Mammary epithelial cell (primary cell): ENCODE measurements at regions of chr3 and their contacts with region 1.

Region 1: GRCh38 chr3:124688581-124689454 is 41.4 kb upstream of the UMPS start:
- DNase-seq: peak; percentile 62
- H3K4me3 ChIP-seq: no peak overlapping the region
- H3K27ac ChIP-seq: no peak overlapping the region
- H3K4me1 ChIP-seq: peaks cover 17% of the 10 kb centered on the region
- H3K27me3 ChIP-seq: no peaks in the 10 kb centered on the region
- CTCF ChIP-seq: peak; percentile 82 to 85

Region 2: DNA sequence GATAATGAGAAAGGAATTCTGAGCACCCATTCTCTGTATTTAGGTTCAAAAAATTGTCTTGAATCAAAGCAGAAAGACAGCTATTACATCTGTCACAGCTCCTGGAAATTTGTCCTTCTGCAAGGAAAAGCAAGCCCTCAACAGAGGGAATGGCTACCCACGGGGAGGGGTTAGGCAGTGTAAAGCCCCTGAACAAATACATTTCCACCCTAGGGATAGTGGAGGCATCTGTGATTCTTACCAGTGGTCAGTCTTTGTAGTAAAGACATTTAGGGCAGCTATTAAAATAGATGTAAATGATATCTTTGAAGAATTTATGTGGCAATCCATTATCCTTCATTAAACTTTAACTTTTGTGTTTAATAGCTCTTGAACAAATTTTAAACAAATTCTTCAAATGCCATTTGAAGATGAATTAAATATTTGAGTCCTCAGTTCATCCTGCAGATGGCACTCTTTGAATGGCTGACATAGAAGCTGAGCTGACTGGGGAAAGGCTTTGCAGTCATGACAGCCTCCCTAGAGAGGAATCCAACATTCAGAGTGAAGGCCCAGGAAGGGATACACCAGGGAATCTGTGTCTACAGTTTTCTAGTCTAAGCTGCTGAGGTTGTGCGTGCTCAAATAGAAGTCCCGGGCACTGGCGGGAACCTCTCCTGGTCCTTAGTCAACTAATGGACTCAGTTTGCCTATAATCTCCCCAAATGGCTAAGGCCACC is 337.2 kb before region 1 on chr3:
- CTCF ChIA-PET with region 1: no interaction called
- dilution Hi-C with region 1: no loop called
- in situ Hi-C with region 1: loop called in 1 of 2 experiments (anchors 25 kb)
- intact Hi-C with region 1: loop called (anchors 5 kb)
- DNase-seq: peak; percentile 28
- H3K4me3 ChIP-seq: no peak overlapping the region
- H3K27ac ChIP-seq: no peak overlapping the region
- H3K4me1 ChIP-seq: no peaks in the 10 kb centered on the region
- H3K27me3 ChIP-seq: peaks cover 2% of the 10 kb centered on the region
- CTCF ChIP-seq: peak; percentile 37 to 70

Region 3: GRCh38 chr3:124492811-124493210 is 196.0 kb before region 1 on chr3:
- CTCF ChIA-PET with region 1: no interaction called
- dilution Hi-C with region 1: no loop called
- in situ Hi-C with region 1: loop called in 1 of 2 experiments (anchors 10 kb)
- intact Hi-C with region 1: loop called (anchors 5 kb)
- DNase-seq: peak; percentile 68
- H3K4me3 ChIP-seq: no peak overlapping the region
- H3K27ac ChIP-seq: no peak overlapping the region
- H3K4me1 ChIP-seq: peaks cover 10% of the 10 kb centered on the region
- H3K27me3 ChIP-seq: no peaks in the 10 kb centered on the region
- CTCF ChIP-seq: peak; percentile 75 to 86

Region 4: GRCh38 chr3:124569761-124570160 is 119.1 kb before region 1 on chr3:
- CTCF ChIA-PET with region 1: interaction called, 3 read pairs
- dilution Hi-C with region 1: no loop called
- in situ Hi-C with region 1: loop called (anchors 5 kb)
- intact Hi-C with region 1: loop called (anchors 1 kb)
- DNase-seq: no peak
- H3K4me3 ChIP-seq: no peak overlapping the region
- H3K27ac ChIP-seq: no peak overlapping the region
- H3K4me1 ChIP-seq: peaks cover 16% of the 10 kb centered on the region
- H3K27me3 ChIP-seq: no peaks in the 10 kb centered on the region
- CTCF ChIP-seq: no peak